CD8-positive, alpha-beta T cell (primary cell): ENCODE measurements at regions of chr11 and their contacts with region 1.

Region 1: DNA sequence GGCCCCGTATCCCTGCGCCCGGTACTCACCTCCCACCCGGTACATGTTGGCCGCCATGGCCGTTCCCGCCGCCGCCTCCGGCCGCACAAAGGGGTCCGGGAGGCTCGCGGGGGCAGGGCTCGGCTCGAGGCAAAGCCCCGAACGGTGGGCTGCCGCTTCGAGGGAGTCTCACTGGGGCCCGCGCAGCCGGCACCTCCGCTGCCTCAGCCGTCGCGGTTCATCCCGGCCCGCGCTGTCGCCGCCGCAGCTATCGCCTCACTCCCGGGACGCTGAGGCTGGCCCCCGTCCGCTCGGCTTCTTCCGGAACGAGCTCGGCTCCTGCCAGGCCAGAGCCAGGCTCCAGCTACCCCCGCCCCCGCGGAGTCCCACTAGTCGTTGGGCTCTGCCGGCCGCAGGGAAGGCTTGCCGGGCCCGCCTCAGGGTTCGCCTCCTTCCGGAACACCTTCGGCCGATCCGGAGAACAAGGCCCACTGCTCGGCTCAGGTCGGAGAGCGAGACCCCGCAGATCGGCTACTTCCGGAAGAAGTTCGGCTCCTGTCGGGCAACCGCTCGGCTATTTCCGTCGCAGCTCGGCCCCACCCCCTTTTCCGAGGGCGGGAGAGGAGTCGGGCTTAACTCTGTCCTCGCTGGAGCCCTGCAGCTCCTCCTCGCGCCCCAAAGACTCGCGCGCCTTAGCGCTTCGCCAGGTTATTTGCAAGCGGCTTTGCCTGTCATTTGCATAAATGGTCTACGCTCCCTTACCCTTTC is at the start of gene MTA2:
- DNase-seq: peak; percentile 98 to 100 (median 99)
- ATAC-seq: peak; percentile 77
- H3K4me3 ChIP-seq: peak within 1 kb of the TSS; percentile 62 to 98
- H3K4me3 Mint-ChIP-seq: peak within 1 kb of the TSS; percentile 89
- H3K27ac ChIP-seq: peak within 1 kb of the TSS; percentile 83 to 86
- H3K27ac Mint-ChIP-seq: peak within 1 kb of the TSS; percentile 92
- H3K4me1 ChIP-seq: peaks cover 22% of the 10 kb centered on the region
- H3K4me1 Mint-ChIP-seq: peaks cover 57% of the 10 kb centered on the region
- H3K27me3 ChIP-seq: no peaks in the 10 kb centered on the region
- H3K27me3 Mint-ChIP-seq: no peaks in the 10 kb centered on the region
- CTCF ChIP-seq: no peak
- total RNA-seq, gene MTA2: 148 to 154 TPM

Region 2: GRCh38 chr11:62612366-62613290 is 11.1 kb after region 1 on chr11 and contains the starts of genes EML3 and ROM1:
- CTCF ChIA-PET with region 1: interaction called, 11 read pairs
- POLR2A ChIA-PET with region 1: interaction called, 10 read pairs
- intact Hi-C with region 1: loop called (anchors 1 kb)
- DNase-seq: peak; percentile 79 to 95 (median 88)
- ATAC-seq: peak; percentile 72
- H3K4me3 ChIP-seq: peak within 1 kb of the TSS; percentile 67 to 97
- H3K4me3 Mint-ChIP-seq: peak within 1 kb of the TSS; percentile 95
- H3K27ac ChIP-seq: peak within 1 kb of the TSS; percentile 91
- H3K27ac Mint-ChIP-seq: peak within 1 kb of the TSS; percentile 99
- H3K4me1 ChIP-seq: peaks cover 38% of the 10 kb centered on the region
- H3K4me1 Mint-ChIP-seq: peaks cover 54% of the 10 kb centered on the region
- H3K27me3 ChIP-seq: no peaks in the 10 kb centered on the region
- H3K27me3 Mint-ChIP-seq: no peaks in the 10 kb centered on the region
- CTCF ChIP-seq: peak; percentile 99
- total RNA-seq, gene EML3: 167 to 189 TPM
- total RNA-seq, gene ROM1: 1.7 to 2.1 TPM

Region 3: DNA sequence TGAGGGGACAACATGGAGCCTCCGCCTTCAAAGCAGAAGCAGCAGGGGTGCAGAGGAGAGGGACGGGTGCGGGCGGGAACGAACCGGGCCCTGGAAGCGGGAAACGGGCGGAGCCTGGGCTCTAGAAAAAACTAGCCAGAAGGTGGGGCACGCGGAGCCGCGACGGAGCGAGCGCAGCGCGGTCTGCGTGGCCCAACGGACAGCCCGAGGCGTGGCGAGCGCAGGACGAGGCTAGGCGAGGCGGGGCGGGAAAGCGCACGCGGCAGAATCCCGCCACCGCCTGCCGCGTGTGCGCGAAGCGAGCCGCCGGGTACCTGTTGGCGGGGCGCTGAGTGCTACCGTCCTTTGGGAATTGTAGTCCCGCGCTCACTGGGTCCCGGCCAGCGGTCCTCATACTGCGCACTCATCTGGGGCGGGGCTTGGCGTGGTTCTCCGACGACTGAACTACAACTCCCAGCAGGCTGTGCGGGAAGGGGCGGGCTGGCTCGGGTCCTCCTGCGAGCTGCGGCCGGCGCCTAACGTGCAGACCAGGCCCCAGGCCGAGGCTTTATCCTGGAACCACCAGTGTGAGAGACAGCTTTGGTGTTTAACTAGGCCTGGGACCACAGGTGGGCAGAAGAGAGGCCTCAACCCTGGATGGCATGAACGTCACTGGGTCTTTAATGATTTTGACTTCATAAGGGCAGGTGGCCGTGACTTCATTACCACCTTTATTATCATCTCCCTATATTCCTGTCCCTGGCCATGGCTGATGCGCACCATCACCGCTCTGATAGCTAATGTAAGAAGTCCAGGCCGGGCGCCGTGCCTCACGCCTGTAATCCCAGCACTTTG is 1070.0 kb after region 1 on chr11 and contains the start of gene ATL3:
- CTCF ChIA-PET with region 1: no interaction called
- POLR2A ChIA-PET with region 1: no interaction called
- intact Hi-C with region 1: loop called in 1 of 2 experiments (anchors 5 kb)
- DNase-seq: peak; percentile 87 to 98 (median 96)
- ATAC-seq: peak; percentile 95
- H3K4me3 ChIP-seq: peak within 1 kb of the TSS; percentile 79 to 91
- H3K4me3 Mint-ChIP-seq: peak within 1 kb of the TSS; percentile 86
- H3K27ac ChIP-seq: peak within 1 kb of the TSS; percentile 65 to 74
- H3K27ac Mint-ChIP-seq: peak within 1 kb of the TSS; percentile 87
- H3K4me1 ChIP-seq: peaks cover 19% of the 10 kb centered on the region
- H3K4me1 Mint-ChIP-seq: peaks cover 29% of the 10 kb centered on the region
- H3K27me3 ChIP-seq: no peaks in the 10 kb centered on the region
- H3K27me3 Mint-ChIP-seq: no peaks in the 10 kb centered on the region
- CTCF ChIP-seq: no peak
- total RNA-seq, gene ATL3: 11.6 to 11.8 TPM